ENCODE measurements at regions of chr10 and their contacts with region 1.

Region 1: DNA sequence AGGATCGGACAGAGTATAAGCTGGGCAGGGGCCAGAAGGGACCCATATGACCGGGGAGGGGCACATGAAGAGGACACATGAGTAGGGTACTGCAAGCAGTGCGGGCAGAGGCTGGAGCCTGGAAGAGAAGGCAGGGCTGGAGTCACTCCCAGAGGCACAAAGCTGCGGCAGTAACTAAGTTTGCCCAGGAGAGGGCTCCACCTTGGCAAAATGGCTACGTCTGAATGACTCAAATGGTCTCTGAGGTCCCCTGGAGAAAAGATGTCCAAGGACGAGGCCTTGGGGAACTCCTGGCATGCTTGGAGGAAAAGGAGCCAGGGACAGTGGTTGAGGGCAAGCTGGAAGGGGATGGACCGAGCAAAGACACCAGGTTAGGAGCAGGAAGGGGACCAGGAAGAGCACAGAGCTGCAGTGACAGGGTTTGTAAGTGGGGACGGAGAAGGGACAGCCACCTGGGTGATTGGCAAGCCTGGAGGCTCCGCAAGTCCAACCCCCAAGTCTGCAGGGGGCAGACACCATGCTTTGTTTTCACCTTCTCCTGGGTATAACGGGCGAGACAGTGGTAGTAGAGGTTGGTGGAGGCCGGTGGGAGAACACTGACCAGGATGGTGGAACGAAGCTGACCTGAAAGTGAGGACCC is 43.1 kb upstream of the LBX1 start:
- DNase-seq: peak; percentile 87
- H3K4me3 Mint-ChIP-seq: no peak overlapping the region
- H3K27ac Mint-ChIP-seq: no peak overlapping the region
- H3K4me1 Mint-ChIP-seq: no peaks in the 10 kb centered on the region
- H3K27me3 Mint-ChIP-seq: peaks cover 19% of the 10 kb centered on the region

Region 2: DNA sequence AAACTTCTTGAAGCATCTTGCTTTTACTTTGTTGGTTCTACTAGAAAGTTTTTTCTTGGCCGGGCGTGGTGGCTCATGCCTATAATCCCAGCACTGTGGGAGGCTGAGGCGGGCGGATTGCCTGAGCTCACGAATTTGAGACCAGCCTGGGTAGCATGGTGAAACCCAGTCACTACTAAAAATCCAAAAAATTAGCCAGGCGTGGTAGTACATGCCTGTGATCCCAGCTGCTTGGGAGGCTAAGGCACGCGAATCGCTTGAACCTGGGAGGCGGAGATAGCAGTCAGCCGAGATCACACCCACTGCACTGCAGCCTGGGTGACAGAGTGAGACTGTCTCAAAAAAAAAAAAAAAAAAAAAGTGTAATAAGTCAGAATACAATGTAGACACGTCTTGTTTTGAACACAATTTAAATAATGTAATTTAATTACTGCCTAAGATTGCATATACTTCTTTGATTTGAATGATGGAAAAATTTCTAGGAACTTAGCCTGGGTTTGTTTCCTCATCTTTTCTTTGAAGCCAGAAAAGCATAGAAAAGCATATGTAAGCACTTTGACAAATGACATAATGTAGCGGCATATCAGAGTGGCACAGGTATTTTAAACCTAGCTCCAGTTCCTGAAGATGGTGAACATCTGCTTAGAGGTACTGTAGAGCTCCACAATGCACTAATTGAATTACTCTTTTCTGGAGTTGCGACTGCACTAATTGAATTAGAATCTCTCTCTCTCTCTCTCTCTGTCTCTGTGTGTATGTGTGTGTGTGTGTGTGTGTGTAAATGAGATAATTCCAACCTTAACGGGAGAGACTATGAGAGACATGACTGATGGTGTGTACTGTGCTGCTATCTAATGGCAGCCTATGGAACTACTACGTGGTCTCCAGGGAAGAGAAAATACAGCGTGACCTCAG is 169.4 kb after region 1 on chr10:
- intact Hi-C with region 1: loop called (anchors 2 kb)
- DNase-seq: peak; percentile 71
- H3K4me3 Mint-ChIP-seq: no peak overlapping the region
- H3K27ac Mint-ChIP-seq: no peak overlapping the region
- H3K4me1 Mint-ChIP-seq: no peaks in the 10 kb centered on the region
- H3K27me3 Mint-ChIP-seq: peaks cover 2% of the 10 kb centered on the region

Region 3: GRCh38 chr10:101569838-101570766 is 297.8 kb after region 1 on chr10:
- intact Hi-C with region 1: loop called (anchors 2 kb)
- DNase-seq: peak; percentile 93
- H3K4me3 Mint-ChIP-seq: peak overlapping the region; percentile 79
- H3K27ac Mint-ChIP-seq: peak overlapping the region; percentile 56
- H3K4me1 Mint-ChIP-seq: peaks cover 17% of the 10 kb centered on the region
- H3K27me3 Mint-ChIP-seq: peaks cover 43% of the 10 kb centered on the region

Measured in activated CD4-positive, alpha-beta T cell treated with anti-CD3 and anti-CD28 coated beads, Interleukin-2, amount 10 ng/mL, durations not matched to agents 24 days and 14 days (primary cell).